CD8-positive, alpha-beta T cell (primary cell): ENCODE measurements at regions of chr7 and their contacts with region 1.

Region 1: GRCh38 chr7:44999245-45000095 is 531 bp upstream of the CCM2 start:
- DNase-seq: peak; percentile 97 to 99 (median 99)
- ATAC-seq: peak; percentile 81
- H3K4me3 ChIP-seq: peak overlapping the region; percentile 59 to 75
- H3K4me3 Mint-ChIP-seq: peak overlapping the region; percentile 99
- H3K27ac ChIP-seq: peak overlapping the region; percentile 70
- H3K27ac Mint-ChIP-seq: peak overlapping the region; percentile 98
- H3K4me1 ChIP-seq: peaks cover 36% of the 10 kb centered on the region
- H3K4me1 Mint-ChIP-seq: peaks cover 51% of the 10 kb centered on the region
- H3K27me3 ChIP-seq: no peaks in the 10 kb centered on the region
- H3K27me3 Mint-ChIP-seq: no peaks in the 10 kb centered on the region
- CTCF ChIP-seq: no peak

Region 2: DNA sequence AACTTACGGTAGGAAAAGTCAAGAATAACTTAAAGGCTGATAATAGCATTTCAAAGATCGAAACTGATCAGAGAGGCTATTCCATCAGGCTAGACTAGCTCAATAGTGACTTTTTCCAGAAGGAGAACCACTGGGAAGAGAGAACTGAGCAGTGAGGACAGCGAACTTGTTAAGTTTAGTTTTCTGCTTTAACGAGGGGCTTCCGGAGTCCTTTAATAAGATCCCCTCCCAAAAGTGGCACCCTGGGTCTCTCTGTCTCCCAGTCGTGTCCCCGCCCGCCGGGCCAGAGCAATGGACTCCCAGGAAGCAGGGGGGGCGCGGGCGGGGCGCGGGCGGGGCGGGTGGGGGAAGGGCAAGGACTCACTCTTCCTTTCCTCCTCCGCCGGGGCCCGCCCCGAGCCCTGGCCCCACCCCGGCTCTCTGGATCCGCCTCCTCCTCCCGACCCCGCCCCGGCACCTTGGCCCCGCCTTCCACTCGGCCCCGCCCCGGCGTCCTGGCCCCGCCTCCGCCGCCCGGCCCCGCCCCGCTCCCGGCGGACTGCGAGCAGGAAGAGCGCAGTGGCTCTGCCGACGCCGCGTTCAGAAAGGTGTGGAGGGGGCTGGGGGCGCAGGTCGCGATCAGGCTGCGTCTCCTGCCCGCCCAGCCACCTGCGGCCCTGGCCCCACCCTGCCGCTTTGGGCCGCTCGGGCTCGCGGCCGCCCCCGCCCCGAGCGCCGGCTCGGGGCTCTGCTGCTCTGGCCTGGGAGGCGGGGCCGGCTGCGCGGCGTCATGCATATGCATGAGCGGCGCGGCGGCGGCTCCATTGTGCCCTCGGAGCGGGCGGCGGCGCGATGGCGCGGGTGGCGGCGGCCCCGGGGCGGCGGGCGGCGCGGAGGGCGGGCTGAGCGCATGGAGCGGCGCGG is 251.2 kb before region 1 on chr7 and contains the start of gene ZMIZ2:
- CTCF ChIA-PET with region 1: no interaction called
- POLR2A ChIA-PET with region 1: no interaction called
- intact Hi-C with region 1: loop called in 1 of 2 experiments (anchors 1 kb)
- DNase-seq: peak; percentile 84 to 98 (median 92)
- ATAC-seq: peak; percentile 91
- H3K4me3 ChIP-seq: peak within 1 kb of the TSS; percentile 77 to 80
- H3K4me3 Mint-ChIP-seq: peak within 1 kb of the TSS; percentile 79
- H3K27ac ChIP-seq: peak within 1 kb of the TSS; percentile 83
- H3K27ac Mint-ChIP-seq: peak within 1 kb of the TSS; percentile 90
- H3K4me1 ChIP-seq: peaks cover 27% of the 10 kb centered on the region
- H3K4me1 Mint-ChIP-seq: peaks cover 35% of the 10 kb centered on the region
- H3K27me3 ChIP-seq: no peaks in the 10 kb centered on the region
- H3K27me3 Mint-ChIP-seq: no peaks in the 10 kb centered on the region
- CTCF ChIP-seq: no peak
- total RNA-seq, gene ZMIZ2: 67.1 to 71.3 TPM

Region 3: DNA sequence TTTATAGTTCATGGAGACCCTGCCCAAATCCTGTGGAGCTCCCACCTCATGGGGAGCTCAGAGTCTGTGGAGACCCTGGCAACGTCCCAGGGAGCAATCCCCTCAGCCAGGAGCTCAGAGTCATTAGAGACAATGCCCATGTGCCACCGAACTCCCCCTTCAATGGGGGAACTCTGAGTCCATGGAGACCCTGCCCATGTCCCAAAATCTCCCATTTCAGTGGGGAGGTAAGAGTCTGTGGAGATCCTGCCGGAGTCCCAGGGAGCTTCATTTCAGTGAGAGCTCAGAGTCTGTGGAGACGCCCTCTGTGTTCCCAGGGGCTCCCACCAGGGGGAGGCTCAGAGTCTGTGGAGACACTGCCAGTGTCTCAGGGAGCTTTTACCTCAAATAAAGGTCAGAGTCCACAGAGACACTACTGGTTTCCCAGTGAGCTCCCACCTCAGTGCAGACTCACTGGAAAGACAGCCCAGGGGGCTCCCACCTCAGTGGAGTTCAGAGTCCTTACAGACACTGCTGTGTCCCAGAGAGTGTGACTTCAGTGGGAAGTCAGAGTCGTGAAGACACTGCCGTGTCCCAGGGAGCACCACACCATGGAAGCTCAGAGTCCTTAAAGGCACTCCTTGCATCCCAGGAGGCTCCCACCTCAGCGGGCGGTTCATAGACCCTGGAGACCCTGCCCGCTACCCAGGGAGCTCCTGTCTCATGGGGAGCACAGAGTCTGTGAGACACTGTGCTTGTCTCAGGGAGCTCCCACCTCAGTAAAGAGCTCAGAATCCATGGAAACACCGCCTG is 25.7 kb before region 1 on chr7:
- CTCF ChIA-PET with region 1: interaction called, 52 read pairs
- POLR2A ChIA-PET with region 1: interaction called, 28 read pairs
- intact Hi-C with region 1: loop called (anchors 1 kb)
- DNase-seq: peak in 8 of 9 experiments; percentile 47 to 72 (median 67)
- ATAC-seq: peak; percentile 19
- H3K4me3 ChIP-seq: no peak overlapping the region
- H3K4me3 Mint-ChIP-seq: no peak overlapping the region
- H3K27ac ChIP-seq: no peak overlapping the region
- H3K27ac Mint-ChIP-seq: peak overlapping the region; percentile 66
- H3K4me1 ChIP-seq: peaks cover 36% of the 10 kb centered on the region
- H3K4me1 Mint-ChIP-seq: peaks cover 44% of the 10 kb centered on the region
- H3K27me3 ChIP-seq: no peaks in the 10 kb centered on the region
- H3K27me3 Mint-ChIP-seq: no peaks in the 10 kb centered on the region
- CTCF ChIP-seq: peak; percentile 59

Region 4: GRCh38 chr7:45021604-45022296 is 22.3 kb after region 1 on chr7:
- CTCF ChIA-PET with region 1: interaction called, 5 read pairs
- POLR2A ChIA-PET with region 1: interaction called, 111 read pairs
- intact Hi-C with region 1: loop called in 1 of 2 experiments (anchors 2 kb)
- DNase-seq: peak in 1 of 9 experiments; percentile 44
- ATAC-seq: peak; percentile 48
- H3K4me3 ChIP-seq: no peak overlapping the region
- H3K4me3 Mint-ChIP-seq: no peak overlapping the region
- H3K27ac ChIP-seq: no peak overlapping the region
- H3K27ac Mint-ChIP-seq: peak overlapping the region; percentile 75
- H3K4me1 ChIP-seq: peaks cover 19% of the 10 kb centered on the region
- H3K4me1 Mint-ChIP-seq: peaks cover 55% of the 10 kb centered on the region
- H3K27me3 ChIP-seq: no peaks in the 10 kb centered on the region
- H3K27me3 Mint-ChIP-seq: no peaks in the 10 kb centered on the region
- CTCF ChIP-seq: no peak

Region 5: GRCh38 chr7:45052011-45052410 is 52.5 kb after region 1 on chr7:
- CTCF ChIA-PET with region 1: no interaction called
- POLR2A ChIA-PET with region 1: interaction called, 3 read pairs
- intact Hi-C with region 1: loop called in 1 of 2 experiments (anchors 10 kb)
- DNase-seq: no peak
- ATAC-seq: no peak
- H3K4me3 ChIP-seq: no peak overlapping the region
- H3K4me3 Mint-ChIP-seq: no peak overlapping the region
- H3K27ac ChIP-seq: no peak overlapping the region
- H3K27ac Mint-ChIP-seq: peak overlapping the region; percentile 73
- H3K4me1 ChIP-seq: no peaks in the 10 kb centered on the region
- H3K4me1 Mint-ChIP-seq: peaks cover 76% of the 10 kb centered on the region
- H3K27me3 ChIP-seq: no peaks in the 10 kb centered on the region
- H3K27me3 Mint-ChIP-seq: no peaks in the 10 kb centered on the region
- CTCF ChIP-seq: no peak